T-cell (primary cell): ENCODE measurements at regions of chrX and their contacts with region 1.

Region 1: GRCh38 chrX:23919706-23920320 is 12.0 kb downstream of the CXorf58 start:
- DNase-seq: no peak
- ATAC-seq: no peak
- H3K4me3 ChIP-seq: no peak overlapping the region
- H3K4me3 Mint-ChIP-seq: no peak overlapping the region
- H3K27ac ChIP-seq: no peak overlapping the region
- H3K27ac Mint-ChIP-seq: no peak overlapping the region
- H3K4me1 ChIP-seq: no peaks in the 10 kb centered on the region
- H3K4me1 Mint-ChIP-seq: peaks cover 0 to 2% (median 0%) of the 10 kb centered on the region in 3 donors
- H3K27me3 ChIP-seq: peaks cover 0 to 2% of the 10 kb centered on the region in 2 experiments
- H3K27me3 Mint-ChIP-seq: peaks cover 0 to 7% of the 10 kb centered on the region in 2 donors

Region 2: DNA sequence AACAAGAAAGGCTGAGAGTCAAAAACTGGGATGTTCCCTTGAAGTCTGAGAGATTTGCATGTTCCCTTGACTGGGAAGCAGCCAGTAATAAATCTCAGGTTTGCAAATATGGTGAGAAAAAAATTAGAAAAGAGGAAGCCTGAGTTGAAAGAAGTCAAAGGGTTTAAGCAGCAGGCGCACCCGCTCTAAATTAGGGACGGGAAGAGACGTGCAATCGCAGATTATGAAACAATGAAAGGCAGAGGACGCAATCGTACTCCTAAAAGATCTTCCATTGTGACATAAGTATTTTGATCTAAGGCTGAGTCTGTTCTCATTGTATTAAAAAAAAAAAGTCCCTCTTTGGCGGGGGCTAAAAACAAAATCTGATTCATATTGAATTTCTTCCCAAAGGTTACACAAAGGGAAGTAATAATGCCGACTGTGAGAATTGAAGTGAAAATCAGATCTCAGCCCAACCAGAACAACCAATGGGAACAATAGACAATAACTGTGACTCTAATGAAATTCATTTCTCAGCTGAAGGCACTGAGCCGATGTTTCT is 108.6 kb before region 1 on chrX:
- CTCF ChIA-PET with region 1: no interaction called
- POLR2A ChIA-PET with region 1: no interaction called
- DNase-seq: no peak
- ATAC-seq: no peak
- H3K4me3 ChIP-seq: no peak overlapping the region
- H3K4me3 Mint-ChIP-seq: peak overlapping the region in 1 of 3 donors; percentile 28
- H3K27ac ChIP-seq: no peak overlapping the region
- H3K27ac Mint-ChIP-seq: no peak overlapping the region
- H3K4me1 ChIP-seq: no peaks in the 10 kb centered on the region
- H3K4me1 Mint-ChIP-seq: peaks cover 1 to 10% (median 8%) of the 10 kb centered on the region in 3 donors
- H3K27me3 ChIP-seq: no peaks in the 10 kb centered on the region
- H3K27me3 Mint-ChIP-seq: peaks cover 0 to 13% of the 10 kb centered on the region in 2 donors

Region 3: GRCh38 chrX:23952984-23953907 is 33.4 kb after region 1 on chrX:
- CTCF ChIA-PET with region 1: interaction called in 1 of 2 experiments, 10 read pairs
- POLR2A ChIA-PET with region 1: interaction called in 1 of 2 experiments, 5 read pairs
- DNase-seq: peak in 34 of 35 experiments; percentile 2 to 58 (median 19)
- ATAC-seq: peak; percentile 89 to 94 (median 92)
- H3K4me3 ChIP-seq: peak overlapping the region; percentile 29 to 44
- H3K4me3 Mint-ChIP-seq: peak overlapping the region; percentile 67 to 87 (median 77)
- H3K27ac ChIP-seq: peak overlapping the region; percentile 82
- H3K27ac Mint-ChIP-seq: peak overlapping the region; percentile 85 to 96
- H3K4me1 ChIP-seq: peaks cover 7 to 9% of the 10 kb centered on the region in 2 experiments
- H3K4me1 Mint-ChIP-seq: peaks cover 29 to 44% (median 35%) of the 10 kb centered on the region in 3 donors
- H3K27me3 ChIP-seq: no peaks in the 10 kb centered on the region
- H3K27me3 Mint-ChIP-seq: no peaks in the 10 kb centered on the region